CD4-positive, alpha-beta T cell (primary cell): ENCODE measurements at regions of chr11 and their contacts with region 1.

Region 1: DNA sequence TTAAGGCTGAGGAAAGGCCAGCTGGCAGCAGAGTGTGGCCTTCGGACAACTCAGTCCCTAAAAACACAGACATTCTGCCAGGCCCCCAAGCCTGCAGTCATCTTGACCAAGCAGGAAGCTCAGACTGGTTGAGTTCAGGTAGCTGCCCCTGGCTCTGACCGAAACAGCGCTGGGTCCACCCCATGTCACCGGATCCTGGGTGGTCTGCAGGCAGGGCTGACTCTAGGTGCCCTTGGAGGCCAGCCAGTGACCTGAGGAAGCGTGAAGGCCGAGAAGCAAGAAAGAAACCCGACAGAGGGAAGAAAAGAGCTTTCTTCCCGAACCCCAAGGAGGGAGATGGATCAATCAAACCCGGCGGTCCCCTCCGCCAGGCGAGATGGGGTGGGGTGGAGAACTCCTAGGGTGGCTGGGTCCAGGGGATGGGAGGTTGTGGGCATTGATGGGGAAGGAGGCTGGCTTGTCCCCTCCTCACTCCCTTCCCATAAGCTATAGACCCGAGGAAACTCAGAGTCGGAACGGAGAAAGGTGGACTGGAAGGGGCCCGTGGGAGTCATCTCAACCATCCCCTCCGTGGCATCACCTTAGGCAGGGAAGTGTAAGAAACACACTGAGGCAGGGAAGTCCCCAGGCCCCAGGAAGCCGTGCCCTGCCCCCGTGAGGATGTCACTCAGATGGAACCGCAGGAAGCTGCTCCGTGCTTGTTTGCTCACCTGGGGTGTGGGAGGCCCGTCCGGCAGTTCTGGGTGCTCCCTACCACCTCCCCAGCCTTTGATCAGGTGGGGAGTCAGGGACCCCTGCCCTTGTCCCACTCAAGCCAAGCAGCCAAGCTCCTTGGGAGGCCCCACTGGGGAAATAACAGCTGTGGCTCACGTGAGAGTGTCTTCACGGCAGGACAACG is 11.7 kb downstream of the CXCR5 start:
- DNase-seq: peak; percentile 59 to 91 (median 76)
- ATAC-seq: peak; percentile 75
- H3K4me3 ChIP-seq: peak overlapping the region; percentile 18
- H3K4me3 Mint-ChIP-seq: peak overlapping the region; percentile 70
- H3K27ac ChIP-seq: peak overlapping the region; percentile 77 to 89
- H3K27ac Mint-ChIP-seq: peak overlapping the region; percentile 97
- H3K4me1 ChIP-seq: peaks cover 94% of the 10 kb centered on the region
- H3K4me1 Mint-ChIP-seq: peaks cover 76% of the 10 kb centered on the region
- H3K27me3 ChIP-seq: no peaks in the 10 kb centered on the region
- H3K27me3 Mint-ChIP-seq: no peaks in the 10 kb centered on the region
- CTCF ChIP-seq: no peak

Region 2: DNA sequence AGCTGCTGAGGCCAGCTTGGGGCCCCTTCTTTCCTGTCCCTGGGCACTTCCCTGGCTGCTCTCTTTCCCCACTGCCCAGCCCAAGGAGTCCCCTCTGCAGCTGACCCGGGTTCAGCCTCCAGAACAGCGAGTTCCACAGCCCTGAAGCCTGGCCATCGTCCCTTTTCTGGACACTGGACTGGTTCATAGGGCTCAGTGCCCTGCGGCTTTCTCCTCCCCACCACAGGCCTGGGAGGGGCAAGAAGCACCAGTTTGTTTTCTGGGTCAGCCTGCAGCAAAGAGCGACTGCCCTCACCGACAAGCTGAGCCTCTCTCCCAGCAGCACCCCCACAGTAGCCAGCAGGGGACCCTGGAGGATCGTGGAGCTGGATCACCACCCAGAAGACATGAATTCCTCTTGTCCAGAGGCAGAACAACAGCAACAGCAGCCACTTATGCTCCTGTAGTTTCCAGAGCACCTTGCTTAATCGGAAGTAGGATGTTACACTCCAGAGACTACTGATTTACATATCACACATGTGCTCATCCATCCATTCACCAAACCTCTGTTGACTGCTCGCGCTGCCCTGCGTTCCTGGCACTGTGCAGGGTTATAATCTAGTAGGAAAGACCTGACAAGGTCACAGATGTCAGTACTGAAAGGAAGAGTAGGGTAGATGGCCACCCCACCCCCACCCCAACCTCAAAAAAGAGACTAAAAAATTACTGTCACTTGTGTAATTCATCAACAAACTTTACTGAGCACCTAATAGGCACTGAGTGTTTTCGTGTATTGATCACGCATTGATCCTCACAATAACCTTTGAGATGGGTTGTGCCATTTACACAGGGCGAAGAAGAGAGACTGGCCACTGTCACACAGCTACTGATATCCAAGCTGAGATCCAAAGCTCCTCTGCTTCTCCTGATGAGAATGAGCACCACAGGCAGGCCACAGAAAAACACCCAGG is 24.7 kb before region 1 on chr11:
- CTCF ChIA-PET with region 1: interaction called, 11 read pairs
- POLR2A ChIA-PET with region 1: interaction called, 41 read pairs
- intact Hi-C with region 1: loop called in 1 of 2 experiments (anchors 1 kb)
- DNase-seq: peak in 6 of 14 experiments; percentile 14 to 66 (median 53)
- ATAC-seq: peak; percentile 44
- H3K4me3 ChIP-seq: peak overlapping the region; percentile 44
- H3K4me3 Mint-ChIP-seq: peak overlapping the region; percentile 76
- H3K27ac ChIP-seq: peak overlapping the region; percentile 94
- H3K27ac Mint-ChIP-seq: peak overlapping the region; percentile 98
- H3K4me1 ChIP-seq: peaks cover 70% of the 10 kb centered on the region
- H3K4me1 Mint-ChIP-seq: peaks cover 53% of the 10 kb centered on the region
- H3K27me3 ChIP-seq: no peaks in the 10 kb centered on the region
- H3K27me3 Mint-ChIP-seq: no peaks in the 10 kb centered on the region
- CTCF ChIP-seq: no peak

Region 3: GRCh38 chr11:118883368-118884071 is 11.9 kb before region 1 on chr11 and contains the start of gene CXCR5:
- CTCF ChIA-PET with region 1: interaction called, 6 read pairs
- POLR2A ChIA-PET with region 1: interaction called, 21 read pairs
- intact Hi-C with region 1: no loop called
- DNase-seq: peak in 10 of 14 experiments; percentile 35 to 84 (median 54)
- ATAC-seq: peak; percentile 72
- H3K4me3 ChIP-seq: peak within 1 kb of the TSS; percentile 56
- H3K4me3 Mint-ChIP-seq: peak within 1 kb of the TSS; percentile 78
- H3K27ac ChIP-seq: peak within 1 kb of the TSS; percentile 39 to 52
- H3K27ac Mint-ChIP-seq: peak within 1 kb of the TSS; percentile 97
- H3K4me1 ChIP-seq: peaks cover 84% of the 10 kb centered on the region
- H3K4me1 Mint-ChIP-seq: peaks cover 79% of the 10 kb centered on the region
- H3K27me3 ChIP-seq: no peaks in the 10 kb centered on the region
- H3K27me3 Mint-ChIP-seq: no peaks in the 10 kb centered on the region
- CTCF ChIP-seq: no peak
- total RNA-seq, gene CXCR5: 13.2 to 14.3 TPM

Region 4: DNA sequence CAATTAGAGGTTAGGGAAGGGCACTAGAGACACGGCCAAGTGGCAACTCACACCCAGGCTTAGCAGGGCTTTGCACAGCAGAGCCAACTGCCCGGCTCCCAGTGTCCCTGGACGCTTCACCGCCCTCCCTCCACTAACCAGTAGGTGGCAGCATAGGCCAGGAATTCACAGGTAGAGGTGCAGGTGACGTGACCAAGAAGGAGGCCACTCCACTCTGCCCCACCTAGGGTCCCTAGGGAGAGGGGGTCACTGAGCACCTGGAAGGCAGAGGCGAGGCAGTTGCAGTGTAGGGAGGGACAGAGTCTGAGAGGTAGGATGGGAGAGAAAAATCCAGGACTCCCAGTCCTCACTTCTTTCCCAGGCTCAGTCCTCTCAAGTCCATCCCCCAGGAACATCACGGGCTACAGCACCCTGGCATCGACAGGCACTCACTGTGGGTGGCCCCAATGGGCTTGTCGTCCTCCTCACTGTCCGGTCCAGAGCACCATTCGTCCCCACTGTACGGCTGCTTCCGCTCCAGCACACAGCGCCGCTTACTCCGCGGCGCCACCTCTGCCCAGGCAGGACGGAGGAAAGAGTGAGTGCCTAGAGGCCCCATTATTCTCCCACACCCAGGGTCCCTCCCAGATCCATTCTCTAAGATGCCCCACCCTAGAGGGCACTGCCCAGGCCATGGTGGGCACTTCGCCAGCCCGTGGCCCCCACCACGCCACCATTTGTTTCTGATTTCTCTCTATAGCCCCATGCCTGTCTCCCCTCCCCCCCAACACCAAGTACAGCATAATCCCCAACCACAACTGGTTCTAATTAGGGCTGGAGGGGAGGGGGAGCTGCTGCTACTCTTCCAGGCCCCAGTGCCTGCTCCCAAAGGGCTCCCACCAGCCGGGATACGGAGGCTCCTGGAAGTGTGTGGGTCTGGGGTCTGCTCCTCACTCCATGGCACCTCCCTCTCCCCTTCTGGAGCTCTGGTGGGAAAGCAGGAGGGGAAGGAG is 12.0 kb after region 1 on chr11:
- CTCF ChIA-PET with region 1: interaction called, 4 read pairs
- POLR2A ChIA-PET with region 1: interaction called, 63 read pairs
- intact Hi-C with region 1: no loop called
- DNase-seq: peak; percentile 78 to 91 (median 86)
- ATAC-seq: peak; percentile 41
- H3K4me3 ChIP-seq: no peak overlapping the region
- H3K4me3 Mint-ChIP-seq: peak overlapping the region; percentile 77
- H3K27ac ChIP-seq: peak overlapping the region; percentile 22 to 49
- H3K27ac Mint-ChIP-seq: peak overlapping the region; percentile 100
- H3K4me1 ChIP-seq: peaks cover 60% of the 10 kb centered on the region
- H3K4me1 Mint-ChIP-seq: peaks cover 48% of the 10 kb centered on the region
- H3K27me3 ChIP-seq: no peaks in the 10 kb centered on the region
- H3K27me3 Mint-ChIP-seq: no peaks in the 10 kb centered on the region
- CTCF ChIP-seq: peak; percentile 88

Region 5: DNA sequence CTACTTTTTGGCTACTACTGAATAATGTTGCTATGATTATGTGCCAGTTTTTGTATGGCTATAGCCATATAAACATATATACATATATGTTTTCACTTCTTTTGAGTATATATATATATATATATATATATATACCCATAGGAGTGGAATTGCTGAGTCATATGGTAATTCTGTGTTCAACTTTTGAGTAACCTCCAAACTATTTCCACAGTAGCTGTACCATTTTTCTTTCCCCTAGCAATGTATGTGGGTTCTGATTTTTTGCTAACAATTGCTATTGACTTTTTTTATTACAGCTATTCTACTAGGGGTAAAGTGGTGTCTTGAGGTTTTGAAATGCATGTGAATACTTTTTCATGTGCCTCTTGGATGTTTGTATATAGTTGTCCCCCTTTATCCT is 341.1 kb after region 1 on chr11:
- CTCF ChIA-PET with region 1: no interaction called
- POLR2A ChIA-PET with region 1: no interaction called
- intact Hi-C with region 1: no loop called
- DNase-seq: no peak
- ATAC-seq: no peak
- H3K4me3 ChIP-seq: no peak overlapping the region
- H3K4me3 Mint-ChIP-seq: no peak overlapping the region
- H3K27ac ChIP-seq: no peak overlapping the region
- H3K27ac Mint-ChIP-seq: peak overlapping the region; percentile 10
- H3K4me1 ChIP-seq: peaks cover 16% of the 10 kb centered on the region
- H3K4me1 Mint-ChIP-seq: peaks cover 64% of the 10 kb centered on the region
- H3K27me3 ChIP-seq: no peaks in the 10 kb centered on the region
- H3K27me3 Mint-ChIP-seq: no peaks in the 10 kb centered on the region
- CTCF ChIP-seq: no peak